ENCODE measurements at regions of chr16 and their contacts with region 1.

Region 1: GRCh38 chr16:74606521-74607310 is at the start of gene GLG1:
- DNase-seq: peak; percentile 87 to 90 (median 89)
- H3K4me3 ChIP-seq: peak within 1 kb of the TSS; percentile 85 to 98 (median 96)
- H3K4me3 Mint-ChIP-seq: peak within 1 kb of the TSS; percentile 98 to 99
- H3K27ac ChIP-seq: peak within 1 kb of the TSS; percentile 69 to 97
- H3K27ac Mint-ChIP-seq: peak within 1 kb of the TSS; percentile 90 to 97 (median 96)
- H3K4me1 ChIP-seq: peaks cover 24 to 42% of the 10 kb centered on the region in 2 donors
- H3K4me1 Mint-ChIP-seq: peaks cover 49% of the 10 kb centered on the region
- H3K27me3 ChIP-seq: peaks cover 0 to 3% of the 10 kb centered on the region in 2 donors
- H3K27me3 Mint-ChIP-seq: peaks cover 3 to 6% (median 5%) of the 10 kb centered on the region in 3 donors
- CTCF ChIP-seq: no peak
- polyA plus RNA-seq, gene GLG1: 40.3 to 69.1 (median 51.1) TPM

Region 2: DNA sequence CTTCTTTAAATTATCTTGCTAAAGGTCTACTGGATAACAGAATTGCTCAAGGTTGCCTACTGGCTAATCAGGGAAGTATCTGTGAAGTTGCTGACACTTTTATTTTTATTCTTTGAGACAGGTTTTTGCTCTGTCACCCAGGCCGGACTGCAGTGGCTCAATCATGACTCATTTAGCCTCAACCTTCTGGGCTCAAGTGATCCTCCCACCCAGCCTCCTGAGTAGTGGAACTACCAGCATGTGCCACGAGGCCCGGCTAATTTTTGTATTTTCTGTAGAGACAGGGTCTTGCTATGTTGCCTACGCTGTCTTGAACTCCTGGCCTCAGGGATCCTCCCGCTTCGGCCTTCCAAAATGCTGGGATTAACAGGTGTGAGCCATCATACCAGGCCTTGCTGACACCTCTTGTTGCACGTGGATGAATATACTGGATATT is 42.9 kb before region 1 on chr16:
- intact Hi-C with region 1: loop called in 1 of 2 experiments (anchors 5 kb)
- DNase-seq: peak; percentile 89 to 94 (median 93)
- H3K4me3 ChIP-seq: peak overlapping the region in 1 of 3 experiments; percentile 54
- H3K4me3 Mint-ChIP-seq: peak overlapping the region in 1 of 2 donors; percentile 24
- H3K27ac ChIP-seq: peak overlapping the region; percentile 77 to 85
- H3K27ac Mint-ChIP-seq: peak overlapping the region; percentile 92 to 97 (median 94)
- H3K4me1 ChIP-seq: peaks cover 29 to 41% of the 10 kb centered on the region in 2 donors
- H3K4me1 Mint-ChIP-seq: peaks cover 46% of the 10 kb centered on the region
- H3K27me3 ChIP-seq: no peaks in the 10 kb centered on the region
- H3K27me3 Mint-ChIP-seq: no peaks in the 10 kb centered on the region
- CTCF ChIP-seq: peak; percentile 19

Region 3: GRCh38 chr16:74700438-74701225 is 93.9 kb after region 1 on chr16 and contains the start of gene MLKL:
- intact Hi-C with region 1: loop called in 1 of 2 experiments (anchors 5 kb)
- DNase-seq: peak; percentile 79 to 84 (median 81)
- H3K4me3 ChIP-seq: peak within 1 kb of the TSS; percentile 69 to 94 (median 92)
- H3K4me3 Mint-ChIP-seq: peak within 1 kb of the TSS; percentile 98 to 100
- H3K27ac ChIP-seq: peak within 1 kb of the TSS; percentile 94 to 96
- H3K27ac Mint-ChIP-seq: peak within 1 kb of the TSS; percentile 96 to 99 (median 99)
- H3K4me1 ChIP-seq: peaks cover 63 to 73% of the 10 kb centered on the region in 2 donors
- H3K4me1 Mint-ChIP-seq: peaks cover 65% of the 10 kb centered on the region
- H3K27me3 ChIP-seq: no peaks in the 10 kb centered on the region
- H3K27me3 Mint-ChIP-seq: no peaks in the 10 kb centered on the region
- CTCF ChIP-seq: no peak
- polyA plus RNA-seq, gene MLKL: 33.6 to 136 (median 37.8) TPM

Region 4: DNA sequence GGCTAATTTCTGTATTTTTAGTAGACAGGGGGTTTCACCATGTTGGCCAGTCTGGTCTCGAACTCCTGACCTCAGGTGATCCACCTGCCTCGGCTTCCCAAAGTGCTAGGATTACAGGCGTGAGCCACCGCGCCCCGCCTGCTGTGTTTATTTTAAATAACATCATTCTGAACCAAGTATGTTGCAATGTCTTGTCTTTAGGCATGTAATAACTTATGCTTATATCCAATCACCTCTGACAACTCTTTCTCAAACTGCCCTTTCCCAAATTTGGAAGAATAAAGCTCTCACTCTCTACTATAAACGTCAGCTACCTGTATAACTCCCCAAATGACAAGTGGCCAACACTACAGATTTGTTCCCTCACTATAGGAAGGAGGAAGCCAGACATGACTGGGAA is 271.0 kb after region 1 on chr16:
- intact Hi-C with region 1: no loop called
- DNase-seq: no peak
- H3K4me3 ChIP-seq: no peak overlapping the region
- H3K4me3 Mint-ChIP-seq: no peak overlapping the region
- H3K27ac ChIP-seq: no peak overlapping the region
- H3K27ac Mint-ChIP-seq: no peak overlapping the region
- H3K4me1 ChIP-seq: no peaks in the 10 kb centered on the region
- H3K4me1 Mint-ChIP-seq: peaks cover 3% of the 10 kb centered on the region
- H3K27me3 ChIP-seq: no peaks in the 10 kb centered on the region
- H3K27me3 Mint-ChIP-seq: no peaks in the 10 kb centered on the region
- CTCF ChIP-seq: no peak